ENCODE measurements at regions of chr2 and their contacts with region 1.

Region 1: DNA sequence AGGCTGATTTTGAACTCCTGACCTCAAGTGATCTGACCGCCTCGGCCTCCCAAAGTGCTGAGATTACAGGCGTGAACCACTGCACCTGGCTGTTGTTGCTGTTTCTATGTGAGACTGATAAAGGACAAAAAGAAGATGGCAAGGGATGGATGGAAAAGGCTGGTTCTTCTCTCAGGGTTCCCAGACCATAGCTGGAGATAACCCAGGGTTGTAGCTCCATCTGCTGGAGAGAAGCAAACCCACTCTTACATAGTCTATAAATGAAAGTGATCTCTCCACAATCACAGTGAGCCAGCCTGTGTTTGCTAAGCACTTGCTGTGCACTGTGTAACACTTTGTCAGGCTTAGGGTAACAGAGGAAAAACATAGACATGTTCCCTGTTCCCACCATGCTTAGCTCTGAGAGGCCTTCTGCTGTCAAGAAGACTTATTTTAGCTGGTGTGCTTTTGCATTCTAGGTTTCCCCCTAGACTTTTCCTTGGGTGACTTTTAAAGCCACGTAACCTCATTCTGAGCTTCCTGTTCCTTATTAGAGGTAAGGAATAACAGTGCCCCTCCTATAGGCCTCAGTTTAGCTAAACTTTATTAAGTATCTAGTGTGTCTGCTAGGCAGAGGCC is 49.7 kb downstream of the LIMS1 start:
- DNase-seq: peak; percentile 48 to 67
- ATAC-seq: peak; percentile 94

Region 2: DNA sequence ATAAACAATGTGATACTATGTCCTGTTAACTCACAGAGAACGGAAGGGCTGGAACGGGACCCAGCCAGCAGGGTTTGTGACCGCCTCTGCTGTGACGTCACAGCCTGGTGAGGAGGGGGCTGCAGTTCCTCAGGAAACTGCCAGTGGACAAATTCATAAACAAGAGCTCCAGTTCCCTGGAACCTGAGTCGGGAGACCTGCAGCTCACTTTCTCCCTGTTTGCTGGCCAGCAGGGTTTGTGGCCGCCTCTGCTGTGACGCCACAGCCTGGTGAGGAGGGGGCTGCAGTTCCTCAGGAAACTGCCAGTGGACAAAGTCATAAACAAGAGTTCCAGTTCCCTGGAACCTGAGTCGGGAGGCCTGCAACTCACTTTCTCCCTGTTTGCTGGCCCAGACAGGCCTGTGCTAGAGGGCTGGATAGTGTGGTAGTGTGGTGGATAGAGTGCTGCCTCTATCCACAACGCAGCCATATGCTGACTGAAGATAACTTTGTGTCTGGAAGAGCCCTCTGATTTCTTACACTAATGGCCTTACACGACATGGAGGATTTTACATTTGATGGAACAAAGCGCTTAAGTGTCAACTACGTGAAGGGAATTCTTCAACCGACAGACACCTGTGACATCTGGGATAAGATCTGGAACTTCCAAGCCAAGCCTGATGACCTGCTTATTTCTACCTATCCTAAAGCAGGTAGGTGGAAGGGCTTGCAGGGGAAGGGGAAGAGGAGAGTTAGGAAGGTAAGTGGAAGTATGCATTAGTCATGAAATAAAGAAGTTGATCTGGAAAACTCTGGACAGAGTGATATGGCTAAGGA is 206.0 kb before region 1 on chr2 and contains the start of gene SULT1C4:
- intact Hi-C with region 1: loop called in 1 of 2 experiments (anchors 10 kb)
- DNase-seq: peak in 1 of 2 donors; percentile 22
- ATAC-seq: no peak
- total RNA-seq, gene SULT1C4: 0.46 to 1.2 TPM

Region 3: GRCh38 chr2:108459441-108459840 is 124.6 kb before region 1 on chr2:
- intact Hi-C with region 1: loop called in 1 of 2 experiments (anchors 5 kb)
- DNase-seq: no peak
- ATAC-seq: no peak

Region 4: GRCh38 chr2:108533832-108534583 is 50.0 kb before region 1 on chr2 and contains the start of gene LIMS1:
- intact Hi-C with region 1: loop called in 1 of 2 experiments (anchors 10 kb)
- DNase-seq: peak; percentile 93 to 94
- ATAC-seq: peak; percentile 93
- total RNA-seq, gene LIMS1: 28.4 to 33.9 TPM

Region 5: DNA sequence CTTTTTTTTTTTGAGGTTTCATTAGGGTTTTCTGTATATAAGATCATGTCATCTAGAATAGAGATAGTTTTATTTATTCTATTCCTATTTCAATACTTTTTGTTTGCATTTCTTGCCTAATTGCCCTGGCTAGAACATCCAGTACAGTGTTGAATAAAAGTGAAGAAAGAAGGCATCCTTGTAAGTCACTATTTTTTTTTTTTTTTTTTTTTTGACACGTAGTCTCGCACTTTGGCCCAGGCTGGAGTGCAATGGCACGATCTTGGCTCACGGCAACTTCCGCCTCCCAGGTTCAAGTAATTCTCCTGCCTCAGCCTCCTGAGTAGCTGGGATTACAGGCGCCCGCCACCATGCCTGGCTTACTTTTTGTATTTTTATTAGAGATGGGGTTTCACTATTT is 107.4 kb after region 1 on chr2:
- intact Hi-C with region 1: no loop called
- DNase-seq: no peak
- ATAC-seq: no peak

Measured in left colon (tissue), 2 donors.